ENCODE measurements at regions of chr1 and their contacts with region 1.

Region 1: GRCh38 chr1:117674521-117675397 is 68.9 kb downstream of the TENT5C start:
- DNase-seq: peak; percentile 68
- H3K4me3 Mint-ChIP-seq: no peak overlapping the region
- H3K27ac Mint-ChIP-seq: no peak overlapping the region
- H3K4me1 Mint-ChIP-seq: peaks cover 16% of the 10 kb centered on the region
- H3K27me3 Mint-ChIP-seq: no peaks in the 10 kb centered on the region

Region 2: DNA sequence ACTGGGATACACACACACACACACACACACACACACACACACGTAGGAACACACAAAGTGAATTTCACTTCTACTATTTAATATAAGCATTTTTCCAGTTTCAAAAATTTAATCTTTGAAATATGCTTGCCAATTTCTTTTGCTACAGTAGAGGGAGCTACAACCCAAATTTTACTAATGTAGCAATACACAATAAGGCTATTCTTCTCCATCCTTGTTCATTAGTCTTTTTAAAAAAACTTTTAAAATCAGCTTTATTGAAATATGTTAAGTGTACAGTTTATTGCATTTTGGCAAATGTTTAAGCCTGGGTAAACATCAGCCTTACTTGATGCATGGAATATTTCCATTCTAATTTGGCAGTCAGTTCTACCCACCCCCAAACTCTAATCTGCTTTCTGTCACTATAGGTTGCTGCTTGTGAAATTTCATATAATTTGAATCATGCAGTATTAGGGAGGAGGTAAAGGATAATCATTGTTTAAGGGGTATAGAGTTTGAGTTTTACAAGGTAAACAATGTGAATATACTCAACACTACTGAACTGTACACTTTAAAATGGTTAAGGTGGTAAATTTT is 161.9 kb before region 1 on chr1:
- CTCF ChIA-PET with region 1: interaction called, 22 read pairs
- POLR2A ChIA-PET with region 1: no interaction called
- intact Hi-C with region 1: loop called (anchors 1 kb)
- DNase-seq: no peak
- H3K4me3 Mint-ChIP-seq: no peak overlapping the region
- H3K27ac Mint-ChIP-seq: no peak overlapping the region
- H3K4me1 Mint-ChIP-seq: no peaks in the 10 kb centered on the region
- H3K27me3 Mint-ChIP-seq: no peaks in the 10 kb centered on the region

Region 3: DNA sequence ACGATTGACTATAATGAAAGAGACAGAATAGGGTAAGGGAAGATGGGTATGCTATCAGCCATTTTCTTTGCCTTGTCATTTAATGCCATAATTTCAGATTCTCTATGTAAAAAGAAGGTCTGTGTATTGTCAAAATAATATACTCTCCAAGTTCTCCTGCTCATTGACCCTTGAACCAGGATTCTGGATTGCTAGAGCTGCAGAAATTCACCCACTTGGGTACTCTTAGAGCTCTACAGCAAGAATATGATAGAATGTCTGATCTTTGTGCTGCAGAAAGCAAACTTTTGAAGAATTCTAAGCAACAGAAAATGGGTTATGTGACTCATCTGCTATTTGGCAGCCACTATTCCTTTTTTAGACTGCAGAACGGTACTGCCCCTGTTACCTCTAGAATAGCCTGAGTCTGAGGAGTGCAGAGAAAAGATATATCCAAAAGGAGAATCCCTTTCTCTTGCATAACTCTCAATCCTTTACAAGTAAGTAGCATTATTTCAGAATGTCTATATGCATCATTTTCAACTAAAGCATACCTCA is 147.1 kb before region 1 on chr1:
- CTCF ChIA-PET with region 1: interaction called, 75 read pairs
- POLR2A ChIA-PET with region 1: no interaction called
- intact Hi-C with region 1: loop called (anchors 1 kb)
- DNase-seq: no peak
- H3K4me3 Mint-ChIP-seq: no peak overlapping the region
- H3K27ac Mint-ChIP-seq: no peak overlapping the region
- H3K4me1 Mint-ChIP-seq: peaks cover 21% of the 10 kb centered on the region
- H3K27me3 Mint-ChIP-seq: no peaks in the 10 kb centered on the region

Region 4: DNA sequence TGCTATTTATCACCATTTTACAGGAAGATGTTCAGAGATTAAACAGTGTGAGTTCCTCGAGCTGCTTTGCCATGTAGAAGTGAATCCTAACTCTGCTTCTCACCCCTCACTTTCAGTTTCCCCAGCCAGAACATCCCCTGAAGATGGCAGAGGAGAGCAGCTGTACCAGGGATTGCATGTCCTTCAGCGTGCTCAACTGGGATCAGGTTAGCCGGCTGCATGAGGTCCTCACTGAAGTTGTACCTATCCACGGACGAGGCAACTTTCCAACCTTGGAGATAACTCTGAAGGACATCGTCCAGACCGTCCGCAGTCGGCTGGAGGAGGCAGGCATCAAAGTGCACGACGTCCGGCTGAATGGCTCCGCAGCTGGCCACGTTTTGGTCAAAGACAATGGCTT is 52.0 kb before region 1 on chr1:
- CTCF ChIA-PET with region 1: interaction called, 11 read pairs
- POLR2A ChIA-PET with region 1: no interaction called
- intact Hi-C with region 1: no loop called
- DNase-seq: no peak
- H3K4me3 Mint-ChIP-seq: no peak overlapping the region
- H3K27ac Mint-ChIP-seq: peak overlapping the region; percentile 26
- H3K4me1 Mint-ChIP-seq: peaks cover 38% of the 10 kb centered on the region
- H3K27me3 Mint-ChIP-seq: no peaks in the 10 kb centered on the region

Region 5: GRCh38 chr1:117698398-117699160 is 23.8 kb after region 1 on chr1:
- CTCF ChIA-PET with region 1: no interaction called
- POLR2A ChIA-PET with region 1: no interaction called
- intact Hi-C with region 1: no loop called
- DNase-seq: no peak
- H3K4me3 Mint-ChIP-seq: no peak overlapping the region
- H3K27ac Mint-ChIP-seq: no peak overlapping the region
- H3K4me1 Mint-ChIP-seq: peaks cover 3% of the 10 kb centered on the region
- H3K27me3 Mint-ChIP-seq: no peaks in the 10 kb centered on the region